ENCODE measurements at regions of chr17 and their contacts with region 1.

Region 1: DNA sequence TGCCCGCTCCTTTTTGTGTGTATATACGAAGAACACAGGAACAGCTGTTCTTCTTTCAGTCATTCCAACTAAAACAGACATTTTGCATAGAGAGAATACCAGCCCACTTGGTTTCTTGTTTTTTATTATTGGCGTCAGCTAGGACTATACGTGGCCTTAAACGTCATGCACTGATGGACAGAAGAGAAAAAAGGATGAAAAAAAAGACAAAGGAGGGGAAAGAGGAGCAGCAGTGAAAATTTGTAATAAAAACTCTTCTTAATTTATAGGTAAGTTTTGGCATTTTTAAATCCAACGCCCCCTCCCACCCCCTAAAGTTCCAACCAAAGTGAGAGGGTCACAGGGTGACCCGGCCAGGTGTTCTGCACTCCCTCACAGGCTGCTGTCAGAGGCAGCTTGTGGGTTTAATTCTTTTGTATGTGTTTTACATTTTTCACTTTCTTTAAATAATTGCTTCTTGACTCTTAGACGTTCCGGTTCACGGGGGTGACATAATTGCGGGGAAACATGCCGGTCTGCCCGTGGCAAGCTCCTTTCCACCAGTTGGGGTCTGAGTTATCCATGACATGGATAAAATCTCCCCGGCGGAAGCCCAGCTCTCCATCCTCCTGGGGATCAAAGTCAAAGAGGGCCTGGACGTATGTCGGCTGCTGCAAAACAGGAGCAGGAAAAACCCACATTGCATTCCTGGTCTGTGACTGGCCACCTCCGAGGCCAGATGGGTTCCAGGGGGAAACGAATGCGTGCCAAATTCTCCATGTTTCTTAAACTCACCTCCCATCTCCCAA is 30.9 kb upstream of the SLC25A19 start:
- DNase-seq: no peak
- ATAC-seq: no peak
- H3K4me3 ChIP-seq: no peak overlapping the region
- H3K4me3 Mint-ChIP-seq: no peak overlapping the region
- H3K27ac ChIP-seq: peak overlapping the region; percentile 51
- H3K27ac Mint-ChIP-seq: no peak overlapping the region
- H3K4me1 ChIP-seq: peaks cover 36% of the 10 kb centered on the region
- H3K4me1 Mint-ChIP-seq: peaks cover 7 to 12% of the 10 kb centered on the region in 2 donors
- H3K27me3 ChIP-seq: no peaks in the 10 kb centered on the region
- H3K27me3 Mint-ChIP-seq: no peaks in the 10 kb centered on the region
- CTCF ChIP-seq: no peak

Region 2: GRCh38 chr17:75380315-75380714 is 60.2 kb after region 1 on chr17:
- intact Hi-C with region 1: no loop called
- DNase-seq: no peak
- ATAC-seq: no peak
- H3K4me3 ChIP-seq: no peak overlapping the region
- H3K4me3 Mint-ChIP-seq: no peak overlapping the region
- H3K27ac ChIP-seq: no peak overlapping the region
- H3K27ac Mint-ChIP-seq: peak overlapping the region; percentile 49 to 56
- H3K4me1 ChIP-seq: peaks cover 15% of the 10 kb centered on the region
- H3K4me1 Mint-ChIP-seq: peaks cover 31 to 44% of the 10 kb centered on the region in 2 donors
- H3K27me3 ChIP-seq: no peaks in the 10 kb centered on the region
- H3K27me3 Mint-ChIP-seq: no peaks in the 10 kb centered on the region
- CTCF ChIP-seq: no peak

Region 3: DNA sequence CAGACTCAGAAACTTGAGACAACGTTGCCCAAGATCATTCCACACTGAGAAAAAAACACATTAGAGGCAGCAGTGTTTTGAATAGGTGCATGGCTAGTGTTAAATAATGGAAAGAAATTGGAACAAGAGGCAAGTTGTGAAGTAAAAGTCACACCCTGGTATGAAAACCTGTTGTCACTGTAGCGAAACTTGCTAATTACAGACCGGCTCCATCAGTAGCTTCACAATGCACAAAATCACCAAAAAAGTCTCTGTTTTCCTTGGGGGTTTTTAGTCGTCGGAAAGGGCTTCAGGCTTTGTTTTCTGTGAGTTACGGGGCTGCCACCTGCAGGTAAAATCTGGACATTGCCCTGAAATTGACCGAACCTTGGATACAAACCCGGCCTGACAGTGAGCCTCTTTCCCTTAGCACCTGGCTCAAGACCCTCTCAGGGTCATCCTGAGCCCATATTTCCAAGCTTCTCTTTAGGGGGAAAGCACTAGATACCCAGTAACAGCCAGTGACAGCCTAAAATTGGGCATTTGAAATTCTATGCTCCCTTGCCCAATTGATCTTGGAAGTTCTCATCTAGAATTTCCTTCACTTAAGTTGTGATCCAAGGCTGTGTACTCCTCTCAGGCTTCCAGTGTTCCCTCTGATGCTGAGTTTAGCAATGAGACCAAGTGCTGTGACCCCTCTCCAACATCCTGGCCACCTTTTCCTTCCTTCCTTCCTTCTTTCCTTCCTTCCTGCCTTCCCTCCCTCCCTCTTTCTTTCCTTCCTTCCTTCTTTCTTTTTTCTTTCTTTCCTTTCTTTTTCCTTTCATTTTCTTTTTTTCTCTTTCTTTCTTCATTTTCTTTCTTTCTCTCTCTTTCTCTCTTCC is 92.6 kb after region 1 on chr17:
- intact Hi-C with region 1: loop called (anchors 1 kb)
- DNase-seq: peak; percentile 72 to 91
- ATAC-seq: peak; percentile 83 to 96 (median 86)
- H3K4me3 ChIP-seq: no peak overlapping the region
- H3K4me3 Mint-ChIP-seq: peak overlapping the region; percentile 71
- H3K27ac ChIP-seq: no peak overlapping the region
- H3K27ac Mint-ChIP-seq: peak overlapping the region; percentile 23 to 69
- H3K4me1 ChIP-seq: peaks cover 9% of the 10 kb centered on the region
- H3K4me1 Mint-ChIP-seq: peaks cover 23 to 28% of the 10 kb centered on the region in 2 donors
- H3K27me3 ChIP-seq: no peaks in the 10 kb centered on the region
- H3K27me3 Mint-ChIP-seq: peaks cover 0 to 6% of the 10 kb centered on the region in 2 donors
- CTCF ChIP-seq: peak; percentile 69